Sciatic nerve (tissue), 2 donors: ENCODE measurements at regions of chr13 and their contacts with region 1.

Region 1: DNA sequence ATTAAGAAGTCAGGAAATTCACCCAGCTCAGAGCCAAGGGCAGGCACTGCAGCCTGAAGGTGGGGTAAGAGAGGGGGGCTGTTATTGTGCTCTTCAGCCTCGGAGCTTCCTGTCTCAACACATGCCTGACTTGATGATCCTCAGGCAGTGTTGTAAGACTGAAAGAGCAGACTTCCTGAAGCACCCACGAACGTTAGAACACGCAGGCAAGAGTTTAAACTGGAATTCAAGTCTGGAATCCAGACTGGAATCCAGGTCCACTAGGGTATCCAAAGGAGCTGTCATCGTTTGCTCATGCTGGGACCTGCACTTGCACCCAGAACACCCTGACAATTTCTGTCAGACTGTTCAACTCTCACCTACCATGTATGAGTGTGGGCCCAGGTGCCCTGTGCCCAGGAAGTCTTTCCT is 10.7 kb upstream of the FLT1 start:
- DNase-seq: no peak
- ATAC-seq: no peak

Region 2: GRCh38 chr13:27424246-27425157 is 1081.1 kb before region 1 on chr13 and contains the start of gene GTF3A:
- intact Hi-C with region 1: no loop called
- DNase-seq: peak; percentile 90
- ATAC-seq: peak; percentile 96
- total RNA-seq, gene GTF3A: 52.2 TPM

Region 3: GRCh38 chr13:28530729-28531076 is 25.1 kb after region 1 on chr13:
- intact Hi-C with region 1: loop called (anchors 1 kb)
- DNase-seq: no peak
- ATAC-seq: no peak